ENCODE measurements at regions of chr10 and their contacts with region 1.

Region 1: DNA sequence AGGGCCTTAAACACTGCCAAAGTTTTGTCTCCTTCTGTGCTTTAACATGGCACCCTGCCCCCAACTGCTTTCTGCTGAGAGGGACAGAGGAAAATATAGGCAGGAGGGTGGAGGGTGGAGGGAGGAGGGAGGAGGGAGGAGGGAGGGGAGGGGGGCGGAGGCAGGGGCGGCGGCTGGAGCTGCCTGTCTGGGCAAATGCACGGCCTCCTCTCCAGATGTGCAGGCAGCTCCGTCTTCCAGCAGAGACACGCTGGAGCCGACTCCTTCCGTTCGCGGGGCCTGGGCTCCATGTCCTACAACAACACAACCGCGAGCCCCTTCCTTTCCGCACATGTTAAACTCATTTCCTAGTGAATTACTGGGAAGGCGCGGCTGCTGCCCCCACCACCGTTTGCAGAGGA is 14.2 kb downstream of the EBF3 start:
- DNase-seq: peak; percentile 82 to 89
- ATAC-seq: peak; percentile 69 to 82 (median 76)
- H3K4me3 ChIP-seq: peak overlapping the region in 6 of 10 donors; percentile 18 to 42 (median 28)
- H3K27ac ChIP-seq: peak overlapping the region; percentile 62 to 94 (median 87)
- H3K4me1 ChIP-seq: peaks cover 29 to 91% (median 65%) of the 10 kb centered on the region in 9 donors
- H3K27me3 ChIP-seq: peaks cover 0 to 6% (median 2%) of the 10 kb centered on the region in 7 donors
- CTCF ChIP-seq: no peak

Region 2: DNA sequence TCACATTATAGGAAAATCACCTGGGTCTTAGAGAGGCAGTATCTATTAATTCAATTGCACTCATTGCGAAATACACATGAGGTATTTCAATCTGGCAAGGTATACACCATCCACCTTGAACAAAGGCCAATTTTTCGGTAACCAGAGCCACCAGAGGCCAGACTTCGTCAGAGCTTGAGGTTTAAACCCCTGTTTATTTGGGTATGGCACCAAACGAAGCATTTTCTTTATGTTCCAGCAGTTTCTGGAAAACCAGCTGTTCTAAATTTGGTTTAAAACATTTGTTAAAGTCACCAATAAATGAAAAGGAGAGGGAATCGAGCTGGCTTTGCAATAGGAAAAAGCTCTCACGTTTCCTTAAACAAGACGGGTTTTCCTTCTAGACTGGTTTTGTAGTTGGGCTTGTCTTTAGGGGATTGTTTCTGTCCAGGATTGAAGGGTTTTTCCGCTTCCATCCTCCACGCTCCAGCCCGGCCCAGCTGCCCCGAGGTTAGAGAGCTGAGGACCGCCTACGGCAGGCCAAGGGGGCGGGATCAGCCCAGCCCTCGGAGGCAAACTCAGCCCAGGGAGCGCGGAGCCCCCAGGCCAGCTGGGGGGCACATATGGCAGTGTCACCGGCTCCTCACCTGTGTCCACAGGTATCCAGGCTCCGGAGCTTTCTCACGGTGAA is 1022.3 kb before region 1 on chr10:
- intact Hi-C with region 1: loop called in 1 of 10 experiments (anchors 10 kb)
- DNase-seq: peak; percentile 60 to 72
- ATAC-seq: peak; percentile 72 to 86 (median 80)
- H3K4me3 ChIP-seq: no peak overlapping the region
- H3K27ac ChIP-seq: peak overlapping the region; percentile 24 to 76 (median 63)
- H3K4me1 ChIP-seq: peaks cover 0 to 40% (median 11%) of the 10 kb centered on the region in 9 donors
- H3K27me3 ChIP-seq: peaks cover 0 to 14% (median 0%) of the 10 kb centered on the region in 7 donors
- CTCF ChIP-seq: no peak

Region 3: GRCh38 chr10:129888784-129889616 is 60.9 kb before region 1 on chr10:
- intact Hi-C with region 1: loop called in 5 of 10 experiments (anchors 5 to 10 kb)
- DNase-seq: peak; percentile 67 to 76
- ATAC-seq: peak; percentile 58 to 80 (median 74)
- H3K4me3 ChIP-seq: no peak overlapping the region
- H3K27ac ChIP-seq: peak overlapping the region in 3 of 10 donors; percentile 24 to 51 (median 44)
- H3K4me1 ChIP-seq: peaks cover 11 to 69% (median 37%) of the 10 kb centered on the region in 9 donors
- H3K27me3 ChIP-seq: no peaks in the 10 kb centered on the region
- CTCF ChIP-seq: peak; percentile 53 to 83 (median 74)

Region 4: GRCh38 chr10:129896136-129896859 is 53.6 kb before region 1 on chr10:
- intact Hi-C with region 1: loop called in 3 of 10 experiments (anchors 5 to 10 kb)
- DNase-seq: no peak
- ATAC-seq: no peak
- H3K4me3 ChIP-seq: no peak overlapping the region
- H3K27ac ChIP-seq: no peak overlapping the region
- H3K4me1 ChIP-seq: peaks cover 13 to 64% (median 34%) of the 10 kb centered on the region in 9 donors
- H3K27me3 ChIP-seq: no peaks in the 10 kb centered on the region
- CTCF ChIP-seq: no peak

Measured in heart right ventricle (tissue), 16 donors.